ENCODE measurements at regions of chr6 and their contacts with region 1.

Region 1: GRCh38 chr6:106181664-106182418 is 95.7 kb downstream of the PRDM1 start:
- DNase-seq: no peak
- H3K4me3 Mint-ChIP-seq: no peak overlapping the region
- H3K27ac Mint-ChIP-seq: peak overlapping the region; percentile 15
- H3K4me1 Mint-ChIP-seq: peaks cover 55% of the 10 kb centered on the region
- H3K27me3 Mint-ChIP-seq: no peaks in the 10 kb centered on the region

Region 2: GRCh38 chr6:105793130-105793529 is 388.7 kb before region 1 on chr6:
- intact Hi-C with region 1: loop called (anchors 10 kb)
- DNase-seq: no peak
- H3K4me3 Mint-ChIP-seq: no peak overlapping the region
- H3K27ac Mint-ChIP-seq: peak overlapping the region; percentile 34
- H3K4me1 Mint-ChIP-seq: peaks cover 86% of the 10 kb centered on the region
- H3K27me3 Mint-ChIP-seq: no peaks in the 10 kb centered on the region

Region 3: DNA sequence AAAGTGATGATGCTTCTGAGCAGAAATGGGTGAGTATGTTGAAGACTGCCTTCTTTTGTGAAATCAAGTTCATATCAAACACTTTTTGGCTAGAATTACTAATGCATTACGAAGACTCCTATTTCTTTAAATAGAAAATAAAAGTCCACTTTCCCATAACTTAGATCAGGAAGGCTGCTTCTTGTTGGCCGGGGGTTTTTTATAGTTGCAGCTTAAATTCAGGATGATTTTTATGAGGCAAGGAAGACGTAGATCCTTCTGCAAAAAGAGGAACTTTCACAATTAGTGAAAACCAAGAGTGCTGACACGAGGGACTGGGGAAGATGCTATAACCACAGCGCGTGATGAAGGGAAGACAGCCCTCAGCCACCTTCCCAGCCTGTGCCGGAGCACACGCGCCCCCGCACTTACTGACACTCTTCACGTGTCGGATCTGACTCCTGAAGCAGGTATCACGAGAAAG is 301.8 kb before region 1 on chr6:
- intact Hi-C with region 1: loop called (anchors 5 kb)
- DNase-seq: no peak
- H3K4me3 Mint-ChIP-seq: peak overlapping the region; percentile 43
- H3K27ac Mint-ChIP-seq: peak overlapping the region; percentile 21
- H3K4me1 Mint-ChIP-seq: peaks cover 58% of the 10 kb centered on the region
- H3K27me3 Mint-ChIP-seq: peaks cover 4% of the 10 kb centered on the region

Region 4: DNA sequence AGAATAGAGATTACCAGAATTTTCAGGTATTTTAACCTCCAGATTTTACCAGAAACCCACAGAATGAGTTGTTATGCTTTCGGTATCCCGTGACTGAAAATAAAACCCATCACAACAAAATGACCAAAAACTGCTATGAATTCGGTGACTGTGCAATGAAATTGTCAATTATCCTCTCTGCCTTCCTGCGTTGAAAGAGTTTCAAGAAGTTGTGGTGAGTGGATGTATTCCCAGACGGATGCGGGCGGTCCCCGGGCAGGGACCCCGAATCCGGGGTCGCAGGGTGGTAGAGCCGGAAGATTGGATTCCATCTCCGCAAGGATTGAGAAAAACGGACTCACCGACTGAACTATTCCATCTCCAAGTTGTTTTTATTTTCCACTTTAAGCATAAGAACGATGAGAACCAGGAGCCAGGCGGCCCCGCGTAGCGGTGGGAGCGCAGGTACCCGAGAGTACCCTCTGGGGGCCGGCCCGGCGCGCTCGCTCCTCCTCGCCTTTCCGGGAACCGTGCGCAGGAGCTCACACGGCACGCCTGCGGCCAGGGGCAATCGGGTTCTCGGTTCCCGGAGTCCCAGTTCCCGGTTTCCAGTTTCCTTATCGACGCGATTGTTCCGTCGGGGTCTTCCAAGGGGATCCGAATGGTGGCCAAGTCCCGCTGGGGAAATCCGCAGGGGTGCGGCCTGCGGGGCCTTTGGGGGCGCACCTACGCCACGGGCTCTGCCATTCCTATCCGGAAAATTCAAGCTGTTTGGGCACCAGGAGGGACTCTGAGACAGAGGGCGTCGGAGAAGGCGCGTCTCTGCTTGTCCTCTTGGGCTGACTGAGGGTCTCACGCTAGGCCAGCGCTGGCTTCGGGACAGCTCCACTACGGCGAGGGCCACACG is 200.6 kb before region 1 on chr6:
- intact Hi-C with region 1: loop called (anchors 5 kb)
- DNase-seq: peak; percentile 36
- H3K4me3 Mint-ChIP-seq: peak overlapping the region; percentile 74
- H3K27ac Mint-ChIP-seq: peak overlapping the region; percentile 85
- H3K4me1 Mint-ChIP-seq: peaks cover 56% of the 10 kb centered on the region
- H3K27me3 Mint-ChIP-seq: peaks cover 3% of the 10 kb centered on the region

Region 5: DNA sequence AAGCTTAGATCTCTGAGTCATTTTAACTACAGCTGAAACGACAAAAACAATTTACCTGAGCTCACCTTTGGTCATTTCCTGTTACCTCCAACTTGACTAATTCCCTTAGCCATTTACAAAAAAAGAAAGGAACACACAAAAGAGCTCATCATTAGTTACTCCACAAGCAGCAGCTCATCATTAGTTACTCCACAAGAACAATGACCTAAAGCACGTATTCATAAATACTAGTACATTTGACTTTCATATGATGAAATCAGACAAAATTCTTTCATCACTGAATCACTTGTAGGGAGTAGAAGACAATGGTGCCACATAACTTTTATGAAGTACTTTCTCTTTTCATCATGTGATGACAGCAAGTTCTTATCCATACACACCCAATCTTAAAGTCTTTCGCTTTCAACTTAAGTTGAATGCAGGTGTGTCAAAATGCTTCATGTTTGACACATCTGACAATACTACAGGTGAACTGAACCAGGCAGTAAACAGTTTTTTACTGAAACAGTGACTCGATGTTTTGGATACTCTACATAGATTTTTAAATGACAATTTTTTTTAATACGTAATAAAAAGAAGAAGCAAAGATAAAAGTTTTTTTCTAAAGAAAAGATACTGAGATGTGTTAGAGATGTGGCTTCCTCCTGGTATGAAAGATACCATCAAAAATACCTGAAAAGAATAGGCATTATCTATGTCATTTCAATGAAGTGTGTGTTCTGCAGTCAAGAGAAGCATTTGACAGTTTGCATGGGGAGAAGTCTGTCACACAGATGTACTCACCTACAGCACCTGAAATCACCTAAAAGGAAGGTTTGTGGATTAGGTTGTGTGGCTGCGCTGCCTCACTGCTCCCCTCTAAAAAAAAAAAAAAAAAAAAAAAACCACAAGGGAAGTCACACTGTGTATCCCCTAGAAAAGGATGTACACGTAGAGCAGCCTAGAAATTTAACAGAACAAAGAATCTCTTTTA is 13.4 kb after region 1 on chr6:
- intact Hi-C with region 1: no loop called
- DNase-seq: no peak
- H3K4me3 Mint-ChIP-seq: peak overlapping the region; percentile 63
- H3K27ac Mint-ChIP-seq: peak overlapping the region; percentile 88
- H3K4me1 Mint-ChIP-seq: peaks cover 60% of the 10 kb centered on the region
- H3K27me3 Mint-ChIP-seq: no peaks in the 10 kb centered on the region

Region 6: GRCh38 chr6:106275692-106276091 is 93.9 kb after region 1 on chr6:
- intact Hi-C with region 1: loop called (anchors 5 kb)
- DNase-seq: no peak
- H3K4me3 Mint-ChIP-seq: no peak overlapping the region
- H3K27ac Mint-ChIP-seq: peak overlapping the region; percentile 12
- H3K4me1 Mint-ChIP-seq: peaks cover 27% of the 10 kb centered on the region
- H3K27me3 Mint-ChIP-seq: no peaks in the 10 kb centered on the region

Region 7: GRCh38 chr6:106309766-106310373 is 128.0 kb after region 1 on chr6:
- intact Hi-C with region 1: loop called (anchors 5 kb)
- DNase-seq: no peak
- H3K4me3 Mint-ChIP-seq: no peak overlapping the region
- H3K27ac Mint-ChIP-seq: no peak overlapping the region
- H3K4me1 Mint-ChIP-seq: peaks cover 37% of the 10 kb centered on the region
- H3K27me3 Mint-ChIP-seq: no peaks in the 10 kb centered on the region